Activated T-helper 2 cell treated with anti-CD3 and anti-CD28 coated beads, Interferon-gamma antibody, Interleukin-2, Interleukin-4, amounts not matched to agents 10 μg/mL and 5 μg/mL and 100 μg/mL, durations not matched to agents 14 hours and 24 hours and 36 hours (primary cell): ENCODE measurements at regions of chr2 and their contacts with region 1.

Region 1: GRCh38 chr2:225041851-225042799 is at the start of gene DOCK10:
- DNase-seq: peak; percentile 40
- H3K4me3 Mint-ChIP-seq: peak within 1 kb of the TSS; percentile 91
- H3K27ac Mint-ChIP-seq: peak within 1 kb of the TSS; percentile 92
- H3K4me1 Mint-ChIP-seq: peaks cover 54% of the 10 kb centered on the region
- H3K27me3 Mint-ChIP-seq: peaks cover 33% of the 10 kb centered on the region
- total RNA-seq, gene DOCK10: 100 and 107 TPM in 2 replicates

Region 2: GRCh38 chr2:224885836-224886547 is 156.1 kb before region 1 on chr2:
- intact Hi-C with region 1: loop called (anchors 1 kb)
- DNase-seq: no peak
- H3K4me3 Mint-ChIP-seq: no peak overlapping the region
- H3K27ac Mint-ChIP-seq: peak overlapping the region; percentile 88
- H3K4me1 Mint-ChIP-seq: peaks cover 61% of the 10 kb centered on the region
- H3K27me3 Mint-ChIP-seq: no peaks in the 10 kb centered on the region

Region 3: GRCh38 chr2:225010804-225011203 is 31.3 kb before region 1 on chr2:
- intact Hi-C with region 1: loop called (anchors 1 kb)
- DNase-seq: no peak
- H3K4me3 Mint-ChIP-seq: no peak overlapping the region
- H3K27ac Mint-ChIP-seq: peak overlapping the region; percentile 82
- H3K4me1 Mint-ChIP-seq: peaks cover 73% of the 10 kb centered on the region
- H3K27me3 Mint-ChIP-seq: no peaks in the 10 kb centered on the region

Region 4: GRCh38 chr2:225025917-225026571 is 16.1 kb before region 1 on chr2:
- intact Hi-C with region 1: loop called (anchors 1 kb)
- DNase-seq: no peak
- H3K4me3 Mint-ChIP-seq: no peak overlapping the region
- H3K27ac Mint-ChIP-seq: peak overlapping the region; percentile 28
- H3K4me1 Mint-ChIP-seq: peaks cover 53% of the 10 kb centered on the region
- H3K27me3 Mint-ChIP-seq: no peaks in the 10 kb centered on the region

Region 5: GRCh38 chr2:225052703-225053102 is 10.6 kb after region 1 on chr2:
- intact Hi-C with region 1: loop called (anchors 1 kb)
- DNase-seq: peak; percentile 44
- H3K4me3 Mint-ChIP-seq: peak overlapping the region; percentile 9
- H3K27ac Mint-ChIP-seq: peak overlapping the region; percentile 76
- H3K4me1 Mint-ChIP-seq: peaks cover 52% of the 10 kb centered on the region
- H3K27me3 Mint-ChIP-seq: peaks cover 18% of the 10 kb centered on the region

Region 6: GRCh38 chr2:225064362-225064761 is 22.2 kb after region 1 on chr2:
- intact Hi-C with region 1: loop called (anchors 1 kb)
- DNase-seq: no peak
- H3K4me3 Mint-ChIP-seq: no peak overlapping the region
- H3K27ac Mint-ChIP-seq: peak overlapping the region; percentile 69
- H3K4me1 Mint-ChIP-seq: peaks cover 43% of the 10 kb centered on the region
- H3K27me3 Mint-ChIP-seq: no peaks in the 10 kb centered on the region

Region 7: DNA sequence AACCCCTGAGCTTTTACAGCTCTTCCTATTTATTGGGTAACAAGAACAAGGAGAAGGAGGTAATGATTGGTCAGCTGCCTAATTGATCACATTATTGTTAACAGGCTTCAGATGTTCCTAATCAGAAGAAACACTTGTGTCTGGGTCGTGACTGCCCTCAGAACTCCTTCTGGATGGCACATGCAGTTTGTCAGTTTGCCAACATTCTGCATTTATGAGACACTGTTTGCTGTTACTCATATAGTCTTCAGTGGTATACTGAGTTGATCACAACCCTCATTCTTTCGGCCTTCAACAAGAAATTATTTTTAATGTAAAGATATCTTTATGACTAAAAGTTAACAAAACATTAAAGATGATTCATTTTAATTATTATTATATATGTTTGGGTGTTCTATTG is 95.8 kb after region 1 on chr2:
- intact Hi-C with region 1: no loop called
- DNase-seq: no peak
- H3K4me3 Mint-ChIP-seq: no peak overlapping the region
- H3K27ac Mint-ChIP-seq: no peak overlapping the region
- H3K4me1 Mint-ChIP-seq: no peaks in the 10 kb centered on the region
- H3K27me3 Mint-ChIP-seq: peaks cover 4% of the 10 kb centered on the region

Region 8: GRCh38 chr2:225254363-225254762 is 212.2 kb after region 1 on chr2:
- intact Hi-C with region 1: no loop called
- DNase-seq: no peak
- H3K4me3 Mint-ChIP-seq: no peak overlapping the region
- H3K27ac Mint-ChIP-seq: no peak overlapping the region
- H3K4me1 Mint-ChIP-seq: no peaks in the 10 kb centered on the region
- H3K27me3 Mint-ChIP-seq: no peaks in the 10 kb centered on the region